GM12878 (cell line): ENCODE measurements at regions of chr2 and their contacts with region 1.

Region 1: DNA sequence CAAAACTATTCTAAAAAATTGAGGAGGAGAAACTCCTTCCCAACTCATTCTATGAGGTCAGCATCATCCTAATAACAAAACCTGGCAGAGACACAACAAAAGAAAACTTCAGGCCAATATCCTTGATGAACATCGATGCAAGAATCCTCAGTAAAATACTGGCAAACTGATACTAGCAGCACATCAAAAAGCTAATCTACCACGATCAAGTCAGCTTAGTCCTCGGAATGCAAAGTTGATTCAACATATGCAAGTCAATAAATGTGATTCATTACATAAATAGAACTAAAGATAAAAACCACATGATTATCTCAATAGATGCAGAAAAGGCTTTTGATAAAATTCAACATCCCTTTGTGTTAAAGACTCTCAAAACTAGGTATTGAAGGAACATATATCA is 63.1 kb downstream of the EHBP1 start:
- DNase-seq: no peak
- ATAC-seq: no peak
- H3K4me3 ChIP-seq: no peak overlapping the region
- H3K27ac ChIP-seq: no peak overlapping the region
- H3K4me1 ChIP-seq: no peaks in the 10 kb centered on the region
- H3K27me3 ChIP-seq: no peaks in the 10 kb centered on the region
- CTCF ChIP-seq: no peak
- EP300 ChIP-seq: no peak
- POLR2A ChIP-seq: no peak
- RAD21 ChIP-seq: no peak

Region 2: DNA sequence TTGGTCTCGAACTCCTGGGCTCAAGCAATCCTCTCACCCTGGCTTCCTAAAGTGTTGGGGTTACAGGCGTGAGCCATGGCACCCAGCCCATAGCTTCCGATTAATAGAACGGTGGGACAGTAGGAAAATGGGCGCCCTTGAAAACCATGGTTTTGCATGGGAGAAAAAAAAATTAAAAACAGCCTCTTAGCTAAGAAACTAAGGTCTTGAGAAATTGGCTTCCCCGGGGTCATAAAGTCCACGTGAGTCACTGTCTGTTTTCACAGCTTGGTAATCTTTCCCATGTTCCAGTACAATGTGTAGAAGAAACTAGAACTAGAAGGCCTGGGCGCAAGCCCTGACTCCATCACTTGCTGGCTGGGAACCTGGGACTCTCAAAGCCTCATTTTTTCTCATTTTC is 552.0 kb before region 1 on chr2:
- CTCF ChIA-PET with region 1: no interaction called
- POLR2A ChIA-PET with region 1: no interaction called
- RAD21 ChIA-PET with region 1: no interaction called
- SMC1A ChIA-PET with region 1: no interaction called
- in situ Hi-C with region 1: no loop called
- intact Hi-C with region 1: no loop called
- DNase-seq: no peak
- ATAC-seq: no peak
- H3K4me3 ChIP-seq: no peak overlapping the region
- H3K27ac ChIP-seq: no peak overlapping the region
- H3K4me1 ChIP-seq: peaks cover 45% of the 10 kb centered on the region
- H3K27me3 ChIP-seq: no peaks in the 10 kb centered on the region
- CTCF ChIP-seq: no peak
- EP300 ChIP-seq: no peak
- POLR2A ChIP-seq: no peak
- RAD21 ChIP-seq: no peak

Region 3: GRCh38 chr2:62738981-62739936 is 29.4 kb before region 1 on chr2:
- CTCF ChIA-PET with region 1: no interaction called
- POLR2A ChIA-PET with region 1: interaction called, 3 read pairs
- RAD21 ChIA-PET with region 1: interaction called, 3 read pairs
- SMC1A ChIA-PET with region 1: interaction called, 14 read pairs
- in situ Hi-C with region 1: no loop called
- intact Hi-C with region 1: no loop called
- DNase-seq: no peak
- ATAC-seq: no peak
- H3K4me3 ChIP-seq: no peak overlapping the region
- H3K27ac ChIP-seq: no peak overlapping the region
- H3K4me1 ChIP-seq: no peaks in the 10 kb centered on the region
- H3K27me3 ChIP-seq: no peaks in the 10 kb centered on the region
- CTCF ChIP-seq: no peak
- EP300 ChIP-seq: no peak
- POLR2A ChIP-seq: no peak
- RAD21 ChIP-seq: no peak